ENCODE measurements at regions of chr1 and their contacts with region 1.

Region 1: GRCh38 chr1:225428068-225428880 is 436 bp upstream of the LBR start:
- DNase-seq: peak; percentile 88
- ATAC-seq: peak; percentile 92
- H3K4me3 Mint-ChIP-seq: peak overlapping the region; percentile 89
- H3K27ac Mint-ChIP-seq: peak overlapping the region; percentile 90
- H3K4me1 Mint-ChIP-seq: peaks cover 48% of the 10 kb centered on the region
- H3K27me3 Mint-ChIP-seq: no peaks in the 10 kb centered on the region
- CTCF ChIP-seq: no peak

Region 2: DNA sequence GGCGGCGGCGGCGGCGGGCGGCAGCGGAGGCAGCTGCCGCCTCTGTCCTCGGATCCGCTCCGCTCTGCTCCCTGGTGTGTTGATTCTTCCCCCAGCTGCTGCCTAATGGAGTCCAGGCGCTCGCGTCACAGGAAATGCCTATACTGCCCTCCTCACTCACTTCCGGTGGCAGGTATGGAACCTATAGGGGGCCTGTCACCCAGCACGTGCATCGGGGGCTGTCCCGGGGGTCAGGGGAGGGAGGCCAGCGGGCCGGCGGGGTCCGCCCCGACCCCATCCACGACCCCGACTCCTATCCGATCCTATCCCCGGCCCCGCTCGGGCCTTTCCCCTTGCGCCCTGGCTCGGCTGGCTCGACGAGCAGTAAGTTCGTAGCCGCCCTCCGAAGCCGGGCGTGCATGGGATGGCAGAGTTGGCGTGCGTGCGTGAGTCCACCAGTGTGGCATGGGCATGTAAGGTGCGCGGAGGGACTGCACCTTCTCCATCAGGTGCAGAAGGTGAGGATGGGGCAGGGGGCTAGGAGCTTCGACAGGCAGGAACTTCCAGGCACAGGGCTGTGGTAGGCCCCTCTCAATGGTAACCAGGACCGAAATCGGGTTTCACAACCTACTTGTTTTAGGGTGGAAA is 993.5 kb before region 1 on chr1 and contains the start of gene WDR26:
- CTCF ChIA-PET with region 1: no interaction called
- POLR2A ChIA-PET with region 1: no interaction called
- intact Hi-C with region 1: loop called (anchors 10 kb)
- DNase-seq: peak; percentile 74
- ATAC-seq: peak; percentile 85
- H3K4me3 Mint-ChIP-seq: peak within 1 kb of the TSS; percentile 96
- H3K27ac Mint-ChIP-seq: peak within 1 kb of the TSS; percentile 97
- H3K4me1 Mint-ChIP-seq: peaks cover 47% of the 10 kb centered on the region
- H3K27me3 Mint-ChIP-seq: no peaks in the 10 kb centered on the region
- CTCF ChIP-seq: no peak
- total RNA-seq, gene WDR26: 75.3 and 91.3 TPM in 2 replicates

Region 3: GRCh38 chr1:225250432-225250831 is 177.8 kb before region 1 on chr1:
- CTCF ChIA-PET with region 1: no interaction called
- POLR2A ChIA-PET with region 1: no interaction called
- intact Hi-C with region 1: loop called (anchors 5 kb)
- DNase-seq: peak; percentile 19
- ATAC-seq: peak; percentile 97
- H3K4me3 Mint-ChIP-seq: peak overlapping the region; percentile 58
- H3K27ac Mint-ChIP-seq: peak overlapping the region; percentile 20
- H3K4me1 Mint-ChIP-seq: peaks cover 12% of the 10 kb centered on the region
- H3K27me3 Mint-ChIP-seq: peaks cover 9% of the 10 kb centered on the region
- CTCF ChIP-seq: no peak

Region 4: GRCh38 chr1:225467193-225468020 is 39.1 kb after region 1 on chr1:
- CTCF ChIA-PET with region 1: no interaction called
- POLR2A ChIA-PET with region 1: interaction called, 68 read pairs
- intact Hi-C with region 1: loop called (anchors 1 kb)
- DNase-seq: peak; percentile 75
- ATAC-seq: peak; percentile 86
- H3K4me3 Mint-ChIP-seq: peak overlapping the region; percentile 90
- H3K27ac Mint-ChIP-seq: peak overlapping the region; percentile 98
- H3K4me1 Mint-ChIP-seq: peaks cover 40% of the 10 kb centered on the region
- H3K27me3 Mint-ChIP-seq: no peaks in the 10 kb centered on the region
- CTCF ChIP-seq: no peak

Measured in activated B cell treated with CpG ODN at 0.5 μM for 24 hours (primary cell).